Caco-2 (cell line): ENCODE measurements at regions of chrX and their contacts with region 1.

Region 1: DNA sequence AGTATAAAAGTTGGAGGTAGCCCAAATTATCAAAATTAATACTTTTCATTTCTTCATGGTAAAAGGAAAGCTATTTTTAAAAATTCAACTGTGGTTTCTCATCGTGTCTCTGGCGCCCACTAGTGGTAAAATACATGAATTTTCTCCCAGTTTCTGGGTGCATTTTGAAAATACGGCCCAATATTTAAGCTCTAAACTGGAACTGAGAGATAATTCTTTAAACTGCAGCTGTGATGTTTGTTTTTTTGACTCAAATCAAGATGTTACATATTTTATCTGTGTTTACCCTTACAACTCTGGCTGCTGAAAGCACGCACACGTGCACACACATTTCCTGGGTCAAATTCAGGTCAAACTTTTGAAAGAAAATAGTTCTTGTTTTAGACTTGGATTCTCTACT is 123.9 kb upstream of the ACSL4 start:
- DNase-seq: peak in 1 of 2 experiments; percentile 11
- H3K4me3 ChIP-seq: no peak overlapping the region
- H3K4me3 Mint-ChIP-seq: no peak overlapping the region
- H3K27ac Mint-ChIP-seq: no peak overlapping the region
- H3K4me1 ChIP-seq: no peaks in the 10 kb centered on the region
- H3K4me1 Mint-ChIP-seq: no peaks in the 10 kb centered on the region
- H3K27me3 ChIP-seq: no peaks in the 10 kb centered on the region
- H3K27me3 Mint-ChIP-seq: no peaks in the 10 kb centered on the region
- CTCF ChIP-seq: peak; percentile 58 to 66

Region 2: GRCh38 chrX:109709129-109709631 is 147.8 kb before region 1 on chrX:
- CTCF ChIA-PET with region 1: interaction called, 84 read pairs
- POLR2A ChIA-PET with region 1: no interaction called
- intact Hi-C with region 1: loop called (anchors 1 kb)
- DNase-seq: peak; percentile 30
- H3K4me3 ChIP-seq: no peak overlapping the region
- H3K4me3 Mint-ChIP-seq: no peak overlapping the region
- H3K27ac Mint-ChIP-seq: no peak overlapping the region
- H3K4me1 ChIP-seq: peaks cover 3% of the 10 kb centered on the region; the same call in 1 of the 2 replicates
- H3K4me1 Mint-ChIP-seq: no peaks in the 10 kb centered on the region
- H3K27me3 ChIP-seq: no peaks in the 10 kb centered on the region
- H3K27me3 Mint-ChIP-seq: no peaks in the 10 kb centered on the region
- CTCF ChIP-seq: no peak

Region 3: DNA sequence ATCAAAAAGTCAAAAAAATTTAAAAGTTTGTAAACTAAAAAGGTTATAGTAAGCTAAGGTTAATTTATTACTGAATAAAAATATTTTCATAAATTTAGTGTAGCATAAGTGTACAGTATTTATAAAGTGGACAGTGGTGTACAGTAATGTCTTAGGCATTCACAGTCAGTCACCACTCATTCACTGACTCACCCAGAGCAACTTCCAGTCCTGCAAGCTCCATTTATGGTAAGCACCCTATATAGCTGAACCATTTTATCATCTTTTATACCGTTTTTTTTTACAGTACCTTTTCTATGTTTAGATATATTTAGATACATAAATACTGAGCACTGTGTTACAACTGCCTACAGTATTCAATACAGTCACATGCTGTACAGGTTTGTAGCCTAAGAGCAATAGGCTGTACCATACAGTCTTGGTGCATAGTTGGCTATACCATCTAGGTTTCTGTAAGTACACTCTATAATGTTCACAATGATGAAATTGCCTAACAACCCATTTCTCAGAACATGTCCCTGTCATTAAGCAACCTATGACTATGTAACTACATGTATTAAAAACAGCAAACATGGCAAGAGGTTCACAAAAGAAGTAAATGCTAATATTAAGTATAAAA is 142.5 kb before region 1 on chrX:
- CTCF ChIA-PET with region 1: interaction called, 84 read pairs
- POLR2A ChIA-PET with region 1: no interaction called
- intact Hi-C with region 1: loop called (anchors 1 kb)
- DNase-seq: no peak
- H3K4me3 ChIP-seq: no peak overlapping the region
- H3K4me3 Mint-ChIP-seq: no peak overlapping the region
- H3K27ac Mint-ChIP-seq: no peak overlapping the region
- H3K4me1 ChIP-seq: peaks cover 3% of the 10 kb centered on the region; the same call in 1 of the 2 replicates
- H3K4me1 Mint-ChIP-seq: no peaks in the 10 kb centered on the region
- H3K27me3 ChIP-seq: no peaks in the 10 kb centered on the region
- H3K27me3 Mint-ChIP-seq: no peaks in the 10 kb centered on the region
- CTCF ChIP-seq: no peak

Region 4: DNA sequence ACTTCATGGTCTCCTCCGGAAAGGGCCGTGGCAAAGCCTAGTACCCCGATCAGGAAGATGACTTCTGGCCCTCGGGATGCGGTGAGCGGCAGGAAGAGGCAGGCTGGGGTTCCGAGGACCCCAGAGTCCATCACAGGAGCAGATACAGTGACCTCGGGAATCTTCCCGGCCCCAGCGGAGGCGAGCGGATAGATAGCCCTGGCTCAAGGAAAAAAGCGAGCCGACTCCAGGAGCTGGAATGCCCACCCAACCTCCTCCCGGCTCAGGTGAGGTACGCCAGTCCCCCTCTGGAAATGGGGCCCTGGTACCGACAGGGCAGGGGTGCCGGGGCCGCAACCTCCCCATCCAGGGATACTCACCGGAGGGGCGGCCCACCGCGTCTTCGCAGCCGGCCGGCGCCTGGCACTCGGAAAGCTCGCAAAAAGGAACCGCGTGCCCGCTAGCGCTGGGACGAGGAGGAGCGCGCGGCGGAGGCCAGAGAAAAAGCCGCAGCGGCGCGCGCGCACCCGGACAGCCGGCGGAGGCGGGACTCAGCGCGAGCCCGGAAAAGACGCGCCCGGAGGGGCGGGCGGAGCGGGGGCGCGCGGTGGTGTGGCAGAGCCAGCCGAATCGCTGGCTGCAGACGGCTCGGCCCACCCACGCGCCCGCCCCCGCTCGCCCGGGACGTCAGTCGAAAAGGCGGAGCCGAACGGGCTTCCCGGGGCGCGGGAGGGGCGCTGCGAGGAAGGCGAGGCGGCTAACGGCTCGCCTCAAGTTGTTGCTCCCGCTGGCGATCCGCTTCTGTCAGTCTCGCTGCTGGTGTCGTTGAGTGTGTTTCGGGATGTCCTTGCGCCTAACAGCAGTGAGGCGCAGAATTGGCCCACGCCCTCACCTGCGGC is 124.0 kb before region 1 on chrX and contains the start of gene ACSL4:
- CTCF ChIA-PET with region 1: no interaction called
- POLR2A ChIA-PET with region 1: no interaction called
- intact Hi-C with region 1: loop called (anchors 5 kb)
- DNase-seq: peak; percentile 78 to 86
- H3K4me3 ChIP-seq: peak within 1 kb of the TSS; percentile 76
- H3K4me3 Mint-ChIP-seq: peak within 1 kb of the TSS; percentile 98
- H3K27ac Mint-ChIP-seq: peak within 1 kb of the TSS; percentile 96
- H3K4me1 ChIP-seq: no peaks in the 10 kb centered on the region; the same call in 1 of the 2 replicates
- H3K4me1 Mint-ChIP-seq: peaks cover 6% of the 10 kb centered on the region
- H3K27me3 ChIP-seq: no peaks in the 10 kb centered on the region
- H3K27me3 Mint-ChIP-seq: no peaks in the 10 kb centered on the region
- CTCF ChIP-seq: no peak
- total RNA-seq, gene ACSL4: 36.3 and 38.3 TPM in 2 replicates

Region 5: DNA sequence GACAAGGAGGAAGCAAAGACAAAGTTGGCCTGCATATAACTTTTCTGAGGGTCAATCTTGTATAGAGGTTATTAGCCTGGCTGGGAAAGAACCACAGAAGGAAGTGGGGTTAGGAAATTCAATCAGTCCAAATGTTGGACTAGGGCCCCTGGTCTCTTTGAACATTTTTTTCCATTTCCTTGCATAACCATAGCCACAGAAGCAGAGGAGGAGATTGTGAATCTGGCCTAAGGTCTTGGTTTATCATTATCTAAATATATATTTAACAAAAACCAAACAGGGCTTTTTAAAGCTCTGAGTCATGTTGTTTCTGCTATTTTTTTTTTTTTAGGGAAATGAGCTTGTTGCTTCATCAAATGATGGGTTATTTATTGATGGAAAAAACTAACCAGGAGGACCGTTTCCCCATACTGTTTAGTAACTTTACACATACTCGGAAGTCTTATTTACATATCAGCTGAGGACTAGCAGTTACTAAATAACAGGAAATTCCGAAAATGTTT is 26.2 kb before region 1 on chrX:
- CTCF ChIA-PET with region 1: interaction called, 5 read pairs
- POLR2A ChIA-PET with region 1: no interaction called
- intact Hi-C with region 1: loop called (anchors 1 kb)
- DNase-seq: peak; percentile 39 to 59
- H3K4me3 ChIP-seq: no peak overlapping the region
- H3K4me3 Mint-ChIP-seq: no peak overlapping the region
- H3K27ac Mint-ChIP-seq: peak overlapping the region; percentile 12
- H3K4me1 ChIP-seq: peaks cover 18% of the 10 kb centered on the region
- H3K4me1 Mint-ChIP-seq: peaks cover 15% of the 10 kb centered on the region
- H3K27me3 ChIP-seq: no peaks in the 10 kb centered on the region
- H3K27me3 Mint-ChIP-seq: no peaks in the 10 kb centered on the region
- CTCF ChIP-seq: no peak

Region 6: DNA sequence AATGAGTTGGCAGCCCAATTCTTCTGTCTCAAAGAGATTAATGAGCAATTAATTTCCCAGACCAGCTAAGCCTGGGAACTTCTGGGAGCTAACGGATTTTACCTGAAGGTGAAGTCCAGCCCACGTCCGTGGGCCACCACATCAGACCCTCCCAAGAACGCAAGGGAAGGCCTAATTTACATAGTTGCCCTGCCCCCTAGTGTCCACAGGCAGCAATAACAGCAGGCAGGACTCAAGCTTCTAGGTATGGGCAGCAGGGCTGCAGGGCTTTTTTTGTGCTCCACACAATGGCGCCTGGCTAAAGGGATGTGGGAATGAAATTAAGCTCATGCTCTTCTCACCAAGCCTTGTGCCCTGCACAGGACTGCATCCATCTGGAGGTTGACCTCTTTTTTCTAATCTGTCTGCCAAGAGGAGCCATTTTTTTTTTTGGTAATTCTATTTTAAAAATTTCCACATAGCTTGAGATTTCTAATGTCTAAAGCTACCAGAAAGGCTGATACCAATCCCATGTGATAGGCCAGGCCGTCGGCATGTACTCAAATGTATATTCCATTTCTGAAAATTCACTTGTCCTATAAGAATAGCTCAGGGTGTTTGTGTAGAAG is 34.0 kb after region 1 on chrX:
- CTCF ChIA-PET with region 1: interaction called, 5 read pairs
- POLR2A ChIA-PET with region 1: no interaction called
- intact Hi-C with region 1: loop called (anchors 2 kb)
- DNase-seq: peak; percentile 58 to 60
- H3K4me3 ChIP-seq: no peak overlapping the region
- H3K4me3 Mint-ChIP-seq: no peak overlapping the region
- H3K27ac Mint-ChIP-seq: no peak overlapping the region
- H3K4me1 ChIP-seq: no peaks in the 10 kb centered on the region
- H3K4me1 Mint-ChIP-seq: no peaks in the 10 kb centered on the region
- H3K27me3 ChIP-seq: no peaks in the 10 kb centered on the region
- H3K27me3 Mint-ChIP-seq: no peaks in the 10 kb centered on the region
- CTCF ChIP-seq: peak; percentile 65 to 73